Activated T-helper 2 cell treated with anti-CD3 and anti-CD28 coated beads, Interferon-gamma antibody, Interleukin-2, Interleukin-4, amounts not matched to agents 10 μg/mL and 5 μg/mL and 100 μg/mL, durations not matched to agents 14 hours and 24 hours and 36 hours (primary cell): ENCODE measurements at regions of chr15 and their contacts with region 1.

Region 1: DNA sequence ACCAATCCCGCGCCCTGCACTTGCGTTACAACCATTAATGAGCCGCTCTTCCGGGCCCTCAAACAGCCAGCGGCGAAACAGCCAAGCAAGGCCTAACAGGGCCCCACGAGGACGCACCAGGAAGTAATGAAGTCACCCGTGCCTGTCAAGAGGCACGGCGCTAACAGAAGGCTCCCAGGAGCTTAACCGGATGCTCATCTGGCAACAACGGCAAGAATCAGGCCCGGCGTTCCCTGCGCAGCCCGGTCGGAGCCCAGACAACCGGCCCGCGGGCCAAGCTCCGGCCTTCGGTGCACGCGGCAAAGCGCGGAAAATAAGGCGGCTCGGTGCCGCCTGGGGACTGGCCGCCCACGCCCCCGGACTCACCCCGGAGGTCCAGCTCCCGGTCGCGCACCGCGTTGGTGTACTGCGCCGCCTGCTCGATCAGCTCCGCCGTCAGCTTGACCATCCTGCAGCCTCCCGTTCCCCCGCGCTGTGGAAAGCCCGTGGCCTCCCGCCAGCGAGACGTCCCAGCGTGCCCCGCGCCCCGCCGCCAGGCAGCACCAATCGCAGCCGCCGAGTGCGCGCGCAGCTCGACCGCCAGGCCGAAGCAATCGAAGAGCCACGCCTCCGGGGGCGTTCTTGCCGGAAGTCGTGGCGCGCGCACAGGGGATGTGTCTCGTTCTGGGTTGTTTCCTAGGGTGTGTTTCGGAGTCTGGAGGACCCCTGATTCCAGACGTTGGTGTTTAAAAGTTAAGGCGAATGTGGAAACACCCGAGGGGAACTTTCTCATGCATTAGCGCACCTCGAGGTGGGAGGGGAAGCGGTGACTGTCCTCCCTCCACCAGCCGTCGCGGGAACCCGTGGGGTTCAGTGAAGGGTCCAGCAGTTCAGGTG is at the start of gene SNRPA1:
- DNase-seq: peak; percentile 96
- H3K4me3 Mint-ChIP-seq: peak within 1 kb of the TSS; percentile 98
- H3K27ac Mint-ChIP-seq: peak within 1 kb of the TSS; percentile 95
- H3K4me1 Mint-ChIP-seq: peaks cover 40% of the 10 kb centered on the region
- H3K27me3 Mint-ChIP-seq: no peaks in the 10 kb centered on the region
- total RNA-seq, gene SNRPA1: 189 and 197 TPM in 2 replicates

Region 2: GRCh38 chr15:100602064-100602822 is 692.7 kb before region 1 on chr15 and contains the starts of genes ASB7 and LINS1:
- intact Hi-C with region 1: loop called (anchors 1 kb)
- DNase-seq: peak; percentile 100
- H3K4me3 Mint-ChIP-seq: no peak within 1 kb of the TSS
- H3K27ac Mint-ChIP-seq: no peak within 1 kb of the TSS
- H3K4me1 Mint-ChIP-seq: peaks cover 50% of the 10 kb centered on the region
- H3K27me3 Mint-ChIP-seq: no peaks in the 10 kb centered on the region
- total RNA-seq, gene ASB7: 18.0 and 19.9 TPM in 2 replicates
- total RNA-seq, gene LINS1: 39.2 and 46.8 TPM in 2 replicates

Region 3: DNA sequence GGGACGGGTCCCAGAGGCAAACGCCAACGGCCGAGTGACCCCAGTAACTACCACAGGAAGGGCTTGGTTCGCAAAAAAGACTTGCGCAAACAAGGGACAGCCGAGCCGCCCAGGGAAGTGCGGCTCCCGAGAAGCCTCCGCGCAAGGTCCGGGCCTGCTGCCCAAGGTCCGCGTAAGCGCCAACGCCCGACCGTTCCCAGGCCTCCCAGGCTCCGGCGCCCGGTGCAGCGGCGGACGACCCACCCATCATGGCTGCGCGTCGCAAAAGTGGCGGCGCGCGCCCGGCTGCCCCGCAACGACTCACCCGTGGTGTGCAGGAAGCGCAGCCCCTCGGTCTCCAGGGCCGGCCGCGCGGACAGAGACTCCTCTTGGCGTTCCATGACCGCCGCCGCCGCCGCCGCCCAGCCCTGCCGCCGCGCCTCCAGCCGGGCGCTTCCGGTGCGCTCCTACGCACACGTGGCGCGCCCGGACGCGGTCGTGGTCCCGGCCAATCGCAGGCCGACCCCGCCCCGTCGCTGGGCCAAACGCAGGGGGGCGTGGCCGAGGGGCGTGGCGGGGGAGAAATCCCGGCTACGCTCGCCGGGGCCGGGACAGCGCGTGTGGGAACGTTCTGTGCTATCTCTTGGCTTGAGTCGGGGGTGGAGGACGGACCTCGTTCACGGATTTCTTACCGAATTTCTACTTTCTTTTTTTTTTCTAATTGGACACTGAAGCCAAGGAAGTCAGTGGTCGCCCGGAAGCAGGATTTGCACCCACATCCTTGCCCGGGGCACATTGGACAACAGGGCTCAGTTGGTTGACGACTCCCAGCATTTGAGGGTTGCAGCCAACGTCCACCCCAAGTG is 17.7 kb before region 1 on chr15 and contains the start of gene SELENOS:
- intact Hi-C with region 1: loop called (anchors 2 kb)
- DNase-seq: peak; percentile 85
- H3K4me3 Mint-ChIP-seq: peak within 1 kb of the TSS; percentile 99
- H3K27ac Mint-ChIP-seq: peak within 1 kb of the TSS; percentile 92
- H3K4me1 Mint-ChIP-seq: peaks cover 24% of the 10 kb centered on the region
- H3K27me3 Mint-ChIP-seq: no peaks in the 10 kb centered on the region
- total RNA-seq, gene SELENOS: 39.2 and 40.5 TPM in 2 replicates

Region 4: DNA sequence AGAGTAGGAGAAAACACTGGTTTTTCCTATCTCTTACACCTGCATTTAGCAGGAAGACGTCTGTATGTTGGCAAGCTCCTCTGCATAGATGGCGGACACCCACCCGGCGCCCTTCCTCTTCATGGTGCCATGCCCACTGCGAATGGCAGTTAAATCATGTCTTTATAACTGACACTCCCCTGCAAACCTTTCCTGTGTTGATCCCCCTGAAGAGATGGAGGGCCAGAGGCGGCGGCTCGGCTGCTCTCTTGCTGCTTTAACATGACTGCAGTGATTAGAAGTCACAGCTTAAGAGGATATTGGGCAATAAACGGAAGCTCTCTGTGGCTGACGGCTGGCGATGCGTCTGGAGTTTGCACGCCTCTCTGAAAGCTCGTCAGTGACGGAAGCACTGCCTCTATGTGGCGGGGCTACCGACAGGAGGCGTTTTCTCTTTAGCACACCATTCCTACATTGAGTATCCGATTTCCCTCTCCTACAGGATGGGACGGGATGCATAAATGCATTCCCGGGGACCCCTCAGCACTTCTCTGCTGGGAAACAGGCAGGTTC is 25.6 kb after region 1 on chr15:
- intact Hi-C with region 1: loop called (anchors 2 kb)
- DNase-seq: peak; percentile 61
- H3K4me3 Mint-ChIP-seq: peak overlapping the region; percentile 67
- H3K27ac Mint-ChIP-seq: peak overlapping the region; percentile 45
- H3K4me1 Mint-ChIP-seq: peaks cover 14% of the 10 kb centered on the region
- H3K27me3 Mint-ChIP-seq: no peaks in the 10 kb centered on the region

Region 5: DNA sequence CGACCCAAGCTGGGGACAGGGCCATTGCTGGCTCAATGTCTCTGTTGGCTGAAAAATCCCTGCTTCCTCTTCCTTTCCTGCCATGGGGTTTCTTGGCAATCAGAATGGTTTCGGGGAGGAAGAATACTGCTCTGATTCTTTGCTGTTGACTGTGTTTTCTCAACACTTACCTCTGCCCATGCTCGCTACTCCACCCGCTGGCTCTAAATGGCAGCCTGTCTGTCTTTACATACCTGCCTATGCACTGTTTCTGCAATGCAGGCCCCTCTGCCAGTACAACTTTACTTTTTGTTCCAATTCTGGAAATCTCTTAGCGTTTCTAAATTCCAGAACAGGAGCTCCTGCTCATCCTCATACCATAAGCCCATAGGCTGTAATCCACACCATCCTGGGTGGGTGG is 38.4 kb after region 1 on chr15:
- intact Hi-C with region 1: loop called (anchors 5 kb)
- DNase-seq: no peak
- H3K4me3 Mint-ChIP-seq: no peak overlapping the region
- H3K27ac Mint-ChIP-seq: peak overlapping the region; percentile 33
- H3K4me1 Mint-ChIP-seq: peaks cover 6% of the 10 kb centered on the region
- H3K27me3 Mint-ChIP-seq: peaks cover 13% of the 10 kb centered on the region

Region 6: DNA sequence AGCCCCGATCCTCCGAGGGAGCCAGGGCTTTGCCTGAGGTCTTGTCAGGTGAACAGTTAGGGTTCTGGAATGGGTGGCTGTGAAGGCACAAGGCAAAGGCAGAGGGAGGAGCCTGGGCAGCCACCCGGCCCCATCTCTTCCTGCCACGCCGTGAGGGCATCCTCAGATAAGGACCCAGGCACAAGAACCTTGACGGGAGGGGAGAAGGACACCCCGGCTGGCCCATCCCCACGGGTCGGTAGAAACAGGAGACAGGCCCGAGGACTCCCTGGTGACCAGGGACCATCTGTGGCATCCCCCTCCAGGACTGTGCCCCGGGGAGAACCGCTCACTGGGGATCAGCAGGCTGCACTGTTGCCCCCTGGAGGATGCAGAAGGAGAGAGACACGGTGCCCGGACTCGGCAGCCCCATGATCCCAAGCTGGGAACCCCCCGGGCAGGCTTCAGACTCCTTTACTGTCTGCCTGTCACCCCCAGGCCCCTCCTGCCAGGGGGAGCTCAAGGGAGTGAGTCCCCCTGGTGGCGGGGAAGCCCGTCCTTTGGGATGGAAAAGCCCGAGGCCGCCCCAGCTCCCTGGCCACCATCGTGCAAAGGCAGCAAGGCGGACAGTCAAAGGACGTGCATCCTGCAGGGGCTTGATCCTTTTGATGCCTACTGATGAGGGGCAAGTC is 206.9 kb after region 1 on chr15:
- intact Hi-C with region 1: loop called (anchors 2 kb)
- DNase-seq: peak; percentile 31
- H3K4me3 Mint-ChIP-seq: peak overlapping the region; percentile 60
- H3K27ac Mint-ChIP-seq: no peak overlapping the region
- H3K4me1 Mint-ChIP-seq: peaks cover 28% of the 10 kb centered on the region
- H3K27me3 Mint-ChIP-seq: peaks cover 15% of the 10 kb centered on the region